Heart left ventricle (tissue), 16 donors: ENCODE measurements at regions of chr20 and their contacts with region 1.

Region 1: GRCh38 chr20:23050847-23051631 is 1.6 kb upstream of the THBD start:
- DNase-seq: peak; percentile 79 to 91 (median 88)
- ATAC-seq: peak; percentile 52 to 74 (median 61)
- H3K4me3 ChIP-seq: peak overlapping the region; percentile 50 to 88 (median 69)
- H3K27ac ChIP-seq: peak overlapping the region; percentile 74 to 97 (median 90)
- H3K4me1 ChIP-seq: peaks cover 0 to 55% (median 27%) of the 10 kb centered on the region in 12 donors
- H3K27me3 ChIP-seq: peaks cover 0 to 48% (median 12%) of the 10 kb centered on the region in 9 donors
- CTCF ChIP-seq: peak; percentile 60 to 86 (median 76)
- POLR2A ChIP-seq: no peak

Region 2: DNA sequence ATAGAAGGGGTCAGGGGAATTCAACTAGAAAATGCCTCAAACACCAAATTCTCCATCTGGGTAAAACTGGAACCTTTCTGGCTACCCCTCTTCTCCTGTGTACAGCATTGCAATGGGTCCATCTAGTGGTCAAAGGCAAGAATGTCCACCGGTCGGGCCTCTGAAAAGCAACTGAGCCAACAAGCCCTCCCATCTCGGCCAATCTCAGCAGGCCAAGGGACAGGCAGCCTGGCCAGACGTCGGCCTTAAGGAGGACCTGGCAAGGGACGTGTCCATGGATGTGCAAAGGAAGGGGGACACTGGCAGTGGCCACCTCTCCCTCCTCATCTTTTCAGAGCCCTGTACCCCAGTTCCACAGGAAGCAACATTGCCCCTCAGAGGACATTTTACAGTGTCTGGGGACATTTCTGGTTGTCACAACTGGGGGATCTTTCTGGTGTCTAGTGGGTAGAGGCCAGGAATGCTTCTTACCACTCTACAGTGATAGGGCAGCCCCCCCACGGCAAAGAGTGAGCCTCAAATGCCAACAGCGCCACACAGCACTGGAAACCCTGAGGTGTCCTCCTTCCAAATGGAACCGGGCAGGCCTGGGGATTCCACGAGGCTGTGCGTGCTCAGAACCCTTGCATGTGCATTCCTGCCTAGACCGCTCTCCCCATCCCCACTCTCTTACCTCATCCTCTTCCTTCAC is 366.8 kb before region 1 on chr20:
- intact Hi-C with region 1: loop called in 1 of 10 experiments (anchors 5 kb)
- DNase-seq: peak; percentile 54 to 71 (median 62)
- ATAC-seq: peak; percentile 57 to 85 (median 82)
- H3K4me3 ChIP-seq: no peak overlapping the region
- H3K27ac ChIP-seq: no peak overlapping the region
- H3K4me1 ChIP-seq: peaks cover 0 to 19% (median 4%) of the 10 kb centered on the region in 12 donors
- H3K27me3 ChIP-seq: peaks cover 0 to 11% (median 0%) of the 10 kb centered on the region in 9 donors
- CTCF ChIP-seq: peak; percentile 77 to 91 (median 85)
- POLR2A ChIP-seq: no peak

Region 3: GRCh38 chr20:22723648-22724047 is 327.4 kb before region 1 on chr20:
- intact Hi-C with region 1: loop called in 1 of 10 experiments (anchors 2 kb)
- DNase-seq: no peak
- ATAC-seq: no peak
- H3K4me3 ChIP-seq: no peak overlapping the region
- H3K27ac ChIP-seq: peak overlapping the region in 1 of 12 donors; percentile 53
- H3K4me1 ChIP-seq: peaks cover 0 to 25% (median 7%) of the 10 kb centered on the region in 12 donors
- H3K27me3 ChIP-seq: no peaks in the 10 kb centered on the region
- CTCF ChIP-seq: no peak
- POLR2A ChIP-seq: no peak

Region 4: DNA sequence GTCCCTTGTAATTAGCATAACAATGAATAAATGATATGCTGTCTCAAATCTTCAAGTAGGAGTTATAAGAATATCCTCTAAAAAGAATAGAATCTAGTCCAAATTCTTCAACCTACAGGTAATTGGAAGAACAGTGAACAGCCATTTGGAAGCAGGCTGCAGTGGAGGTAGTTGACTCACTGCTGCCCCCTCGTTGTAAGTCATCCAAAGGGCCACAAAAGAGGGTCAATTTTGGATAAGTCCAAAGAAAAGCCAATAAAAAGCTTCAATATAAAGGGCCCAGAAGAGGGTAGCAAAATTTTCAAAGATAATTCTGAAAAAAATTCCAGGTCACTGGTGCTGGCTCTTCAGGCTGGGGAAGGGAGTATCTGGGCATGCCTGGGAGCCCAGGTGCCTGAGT is 76.7 kb before region 1 on chr20:
- intact Hi-C with region 1: loop called in 3 of 10 experiments (anchors 2 to 5 kb)
- DNase-seq: no peak
- ATAC-seq: no peak
- H3K4me3 ChIP-seq: no peak overlapping the region
- H3K27ac ChIP-seq: no peak overlapping the region
- H3K4me1 ChIP-seq: peaks cover 0 to 20% (median 13%) of the 10 kb centered on the region in 12 donors
- H3K27me3 ChIP-seq: peaks cover 0 to 3% (median 0%) of the 10 kb centered on the region in 9 donors
- CTCF ChIP-seq: peak in 5 of 12 donors; percentile 7 to 27 (median 14)
- POLR2A ChIP-seq: no peak

Region 5: DNA sequence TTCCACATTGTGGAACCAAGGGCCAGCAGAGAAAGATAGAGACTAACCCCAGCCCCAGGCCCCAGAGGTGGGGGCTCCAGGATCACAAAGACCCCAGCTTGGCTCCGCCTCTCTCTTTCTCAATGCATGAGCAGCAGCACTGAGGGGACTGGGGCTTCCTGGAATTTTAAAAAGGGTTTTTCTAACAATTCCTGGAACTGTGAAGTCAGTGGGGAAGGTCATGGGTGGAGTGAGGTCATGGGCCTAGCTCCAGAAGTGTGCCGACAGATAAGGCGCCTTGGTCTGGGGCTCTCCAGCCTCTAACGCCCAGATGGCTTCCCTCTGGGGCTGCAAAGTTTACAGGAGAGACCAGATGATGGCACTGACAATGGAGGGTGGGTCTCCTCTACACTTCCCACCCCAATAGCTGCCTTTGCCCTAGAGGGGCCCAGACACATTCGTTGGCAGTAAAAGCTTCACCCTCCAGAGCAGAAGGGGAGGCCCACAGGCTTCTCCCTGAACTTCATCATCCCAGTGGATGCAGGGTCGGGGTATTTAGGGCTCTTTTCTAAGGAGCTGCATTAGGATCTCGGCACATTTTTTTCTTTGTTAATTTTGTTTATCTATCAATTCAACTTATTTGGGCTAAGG is 82.0 kb after region 1 on chr20:
- intact Hi-C with region 1: loop called in 1 of 10 experiments (anchors 5 kb)
- DNase-seq: peak in 4 of 5 donors; percentile 70 to 80 (median 74)
- ATAC-seq: peak; percentile 62 to 90 (median 79)
- H3K4me3 ChIP-seq: peak overlapping the region in 1 of 12 donors; percentile 3
- H3K27ac ChIP-seq: peak overlapping the region; percentile 23 to 86 (median 76)
- H3K4me1 ChIP-seq: peaks cover 3 to 86% (median 41%) of the 10 kb centered on the region in 12 donors
- H3K27me3 ChIP-seq: no peaks in the 10 kb centered on the region
- CTCF ChIP-seq: no peak
- POLR2A ChIP-seq: no peak

Region 6: DNA sequence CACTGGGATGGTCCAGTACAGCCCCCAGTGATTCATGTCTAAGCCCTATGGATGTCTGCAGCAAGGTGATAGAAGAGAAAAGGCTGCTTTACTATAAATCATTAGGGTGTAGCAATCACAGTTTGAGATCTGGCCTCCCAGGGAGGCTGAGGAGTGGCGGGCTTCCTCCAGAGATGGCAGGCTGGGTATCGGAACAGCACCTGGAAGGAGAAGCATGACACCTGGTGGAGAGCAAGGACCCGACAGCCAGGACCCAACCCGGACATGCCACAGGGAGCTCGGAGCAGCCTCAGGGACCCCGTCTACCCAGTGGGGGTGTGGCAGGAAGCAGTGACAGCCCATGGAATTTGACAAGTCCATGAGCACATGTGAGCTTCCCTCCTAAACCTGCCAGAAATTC is 149.9 kb after region 1 on chr20:
- intact Hi-C with region 1: loop called in 5 of 10 experiments (anchors 5 to 10 kb)
- DNase-seq: peak in 3 of 5 donors; percentile 49 to 58 (median 50)
- ATAC-seq: peak in 3 of 4 donors; percentile 33 to 53 (median 42)
- H3K4me3 ChIP-seq: no peak overlapping the region
- H3K27ac ChIP-seq: no peak overlapping the region
- H3K4me1 ChIP-seq: peaks cover 9 to 52% (median 28%) of the 10 kb centered on the region in 12 donors
- H3K27me3 ChIP-seq: no peaks in the 10 kb centered on the region
- CTCF ChIP-seq: peak; percentile 10 to 58 (median 40)
- POLR2A ChIP-seq: no peak

Region 7: DNA sequence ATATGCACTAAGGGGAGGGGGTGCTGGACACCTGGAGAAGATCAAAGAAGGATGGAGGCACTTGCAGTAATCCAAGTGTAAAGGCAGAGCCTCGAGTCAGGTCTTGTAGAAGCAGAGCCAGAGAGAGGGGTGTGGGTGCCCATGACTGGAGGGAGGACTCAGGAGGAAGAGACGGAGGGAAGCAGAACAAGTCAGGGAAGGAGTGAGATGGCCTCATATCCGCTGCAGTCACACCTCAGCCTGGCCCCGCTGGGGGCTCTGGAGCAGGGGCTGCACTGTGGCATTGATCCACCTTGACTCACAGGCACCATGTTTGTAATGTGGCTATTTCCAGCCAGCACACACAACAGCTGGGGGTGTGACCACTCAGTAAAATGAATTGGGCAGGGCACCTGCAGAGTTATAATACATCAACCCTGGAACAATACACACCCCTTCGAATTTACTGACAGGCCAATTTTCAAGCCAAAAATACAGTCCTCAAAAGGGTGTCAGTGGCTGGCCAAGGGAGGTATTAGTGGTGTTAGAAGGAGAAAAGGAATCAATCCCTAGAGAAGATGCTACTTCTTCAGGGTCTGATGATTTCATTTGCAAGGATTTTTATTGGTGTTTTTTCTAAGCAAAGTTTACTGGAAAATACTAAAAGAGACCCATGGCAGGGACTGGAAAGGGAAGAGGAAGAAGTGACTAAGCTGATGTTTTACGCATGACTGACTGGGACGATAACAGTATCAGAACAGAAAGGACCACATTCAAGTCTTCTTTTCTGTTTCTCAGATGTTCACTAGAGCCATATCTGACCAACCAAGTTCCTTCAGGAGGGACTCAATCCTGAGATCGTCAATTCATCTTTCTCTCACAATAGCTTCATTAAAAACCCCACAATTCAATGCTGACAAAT is 280.7 kb after region 1 on chr20:
- intact Hi-C with region 1: loop called in 2 of 10 experiments (anchors 5 to 10 kb)
- DNase-seq: no peak
- ATAC-seq: peak in 1 of 4 donors; percentile 52
- H3K4me3 ChIP-seq: no peak overlapping the region
- H3K27ac ChIP-seq: no peak overlapping the region
- H3K4me1 ChIP-seq: peaks cover 0 to 14% (median 0%) of the 10 kb centered on the region in 12 donors
- H3K27me3 ChIP-seq: no peaks in the 10 kb centered on the region
- CTCF ChIP-seq: no peak
- POLR2A ChIP-seq: no peak